Endothelial cell of umbilical vein (primary cell): ENCODE measurements at regions of chr3 and their contacts with region 1.

Region 1: GRCh38 chr3:194930377-194931204 is 244.9 kb downstream of the FAM43A start:
- DNase-seq: peak; percentile 99
- H3K4me3 ChIP-seq: no peak overlapping the region
- H3K27ac ChIP-seq: peak overlapping the region; percentile 98
- H3K4me1 ChIP-seq: peaks cover 47% of the 10 kb centered on the region
- H3K27me3 ChIP-seq: no peaks in the 10 kb centered on the region
- CTCF ChIP-seq: no peak
- POLR2A ChIP-seq: peak; percentile 41

Region 2: DNA sequence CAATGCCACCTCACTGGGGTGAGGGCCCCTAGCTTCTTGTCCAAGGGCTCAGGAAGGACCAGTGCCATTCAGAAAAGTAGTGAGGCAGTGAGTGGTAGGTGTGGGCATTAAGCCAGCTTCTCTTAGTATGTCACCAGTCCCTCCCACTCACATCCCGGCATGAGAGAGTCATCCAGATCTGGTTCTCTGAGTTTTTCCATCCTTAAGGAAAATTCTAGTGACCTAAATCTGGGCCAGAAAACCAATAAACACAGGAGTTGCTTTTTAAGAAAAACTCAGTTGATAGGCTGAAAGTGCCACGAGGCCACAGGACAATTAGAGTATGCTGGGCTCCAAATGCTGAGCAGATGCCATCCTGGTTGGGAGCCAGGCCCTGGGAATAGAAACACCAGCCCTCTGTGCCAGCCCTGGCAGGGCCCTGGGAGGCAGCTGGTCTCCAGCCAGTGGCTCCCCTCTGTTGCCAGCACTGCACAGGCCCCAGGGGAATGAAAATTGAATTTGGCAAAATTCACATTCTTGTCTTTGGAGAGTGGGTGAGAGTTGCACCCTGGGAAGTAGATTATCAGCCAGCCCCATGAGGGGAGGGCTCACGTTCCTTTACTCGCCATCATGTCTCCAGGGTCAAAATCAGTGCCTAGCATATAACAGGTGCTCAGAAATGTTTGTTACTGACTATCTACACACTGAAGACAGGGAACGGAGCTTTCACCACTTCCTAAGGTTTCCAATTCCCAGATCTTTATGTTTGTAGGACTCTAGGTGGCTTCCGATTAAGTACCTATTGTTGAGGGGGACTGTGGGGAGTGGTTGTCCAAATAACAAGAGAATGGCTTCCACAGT is 192.1 kb before region 1 on chr3:
- CTCF ChIA-PET with region 1: interaction called, 6 read pairs
- POLR2A ChIA-PET with region 1: interaction called, 12 read pairs
- dilution Hi-C with region 1: no loop called
- intact Hi-C with region 1: loop called (anchors 1 kb)
- DNase-seq: peak; percentile 76
- H3K4me3 ChIP-seq: no peak overlapping the region
- H3K27ac ChIP-seq: peak overlapping the region; percentile 76
- H3K4me1 ChIP-seq: peaks cover 44% of the 10 kb centered on the region
- H3K27me3 ChIP-seq: no peaks in the 10 kb centered on the region
- CTCF ChIP-seq: no peak
- POLR2A ChIP-seq: no peak

Region 3: DNA sequence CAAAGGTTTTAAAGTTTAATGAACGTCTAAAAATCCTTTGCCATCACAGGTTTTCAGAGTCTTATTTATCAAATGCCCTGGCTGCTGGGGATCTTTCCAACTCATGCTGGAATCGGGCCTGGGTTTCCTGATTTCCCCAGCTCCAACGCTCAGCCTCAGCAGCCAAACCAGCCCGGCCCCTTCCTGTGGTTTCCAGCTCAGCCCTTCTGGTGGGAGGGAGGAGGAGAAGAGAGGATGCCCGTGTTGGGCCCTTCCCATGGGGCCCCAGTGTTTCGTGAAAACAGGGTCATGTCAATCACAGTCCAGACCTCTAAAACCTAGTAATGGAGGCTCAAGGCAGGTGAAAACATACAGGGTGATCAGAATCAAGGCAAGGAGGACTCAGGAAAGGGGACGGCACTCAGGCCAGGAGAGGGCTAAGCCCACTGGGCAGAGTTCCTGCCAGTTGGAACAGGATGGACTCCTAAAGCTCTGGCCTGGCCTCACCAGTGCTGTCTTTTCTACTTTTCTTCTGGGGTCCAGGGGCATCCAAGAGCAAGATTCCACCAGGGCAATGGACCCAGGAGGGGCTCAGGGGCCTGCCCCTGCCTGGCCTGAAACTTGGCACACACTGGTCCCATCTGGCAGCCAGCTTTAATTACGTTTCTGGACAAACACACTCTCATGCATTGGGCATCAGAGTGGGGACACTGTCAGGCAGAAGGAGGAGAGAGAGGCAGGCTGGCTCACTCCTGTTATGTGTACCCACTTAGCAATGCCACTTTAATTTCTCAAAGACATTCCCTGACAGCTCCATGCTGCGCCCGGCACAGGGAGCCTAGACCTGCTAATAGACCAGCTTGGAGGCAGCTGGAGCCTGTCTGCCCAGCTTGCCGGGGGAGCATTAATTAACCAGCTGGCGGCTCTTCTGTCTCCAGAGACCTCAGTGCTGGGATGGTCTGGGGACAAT is 50.3 kb before region 1 on chr3:
- CTCF ChIA-PET with region 1: interaction called, 18 read pairs
- POLR2A ChIA-PET with region 1: interaction called, 6 read pairs
- dilution Hi-C with region 1: no loop called
- intact Hi-C with region 1: loop called (anchors 1 kb)
- DNase-seq: peak; percentile 80
- H3K4me3 ChIP-seq: no peak overlapping the region
- H3K27ac ChIP-seq: peak overlapping the region; percentile 54
- H3K4me1 ChIP-seq: peaks cover 28% of the 10 kb centered on the region
- H3K27me3 ChIP-seq: no peaks in the 10 kb centered on the region
- CTCF ChIP-seq: no peak
- POLR2A ChIP-seq: no peak

Region 4: GRCh38 chr3:195001961-195002861 is 71.6 kb after region 1 on chr3:
- CTCF ChIA-PET with region 1: interaction called, 3 read pairs
- POLR2A ChIA-PET with region 1: no interaction called
- dilution Hi-C with region 1: no loop called
- intact Hi-C with region 1: loop called (anchors 1 kb)
- DNase-seq: peak; percentile 80
- H3K4me3 ChIP-seq: no peak overlapping the region
- H3K27ac ChIP-seq: no peak overlapping the region
- H3K4me1 ChIP-seq: peaks cover 5% of the 10 kb centered on the region
- H3K27me3 ChIP-seq: no peaks in the 10 kb centered on the region
- CTCF ChIP-seq: peak; percentile 67 to 83
- POLR2A ChIP-seq: no peak

Region 5: GRCh38 chr3:195154793-195155535 is 224.4 kb after region 1 on chr3:
- CTCF ChIA-PET with region 1: interaction called, 5 read pairs
- POLR2A ChIA-PET with region 1: interaction called, 8 read pairs
- dilution Hi-C with region 1: no loop called
- intact Hi-C with region 1: loop called (anchors 1 kb)
- DNase-seq: peak; percentile 100
- H3K4me3 ChIP-seq: no peak overlapping the region
- H3K27ac ChIP-seq: peak overlapping the region; percentile 95
- H3K4me1 ChIP-seq: peaks cover 86% of the 10 kb centered on the region
- H3K27me3 ChIP-seq: no peaks in the 10 kb centered on the region
- CTCF ChIP-seq: no peak
- POLR2A ChIP-seq: peak; percentile 80